ENCODE measurements at regions of chr5 and their contacts with region 1.

Region 1: DNA sequence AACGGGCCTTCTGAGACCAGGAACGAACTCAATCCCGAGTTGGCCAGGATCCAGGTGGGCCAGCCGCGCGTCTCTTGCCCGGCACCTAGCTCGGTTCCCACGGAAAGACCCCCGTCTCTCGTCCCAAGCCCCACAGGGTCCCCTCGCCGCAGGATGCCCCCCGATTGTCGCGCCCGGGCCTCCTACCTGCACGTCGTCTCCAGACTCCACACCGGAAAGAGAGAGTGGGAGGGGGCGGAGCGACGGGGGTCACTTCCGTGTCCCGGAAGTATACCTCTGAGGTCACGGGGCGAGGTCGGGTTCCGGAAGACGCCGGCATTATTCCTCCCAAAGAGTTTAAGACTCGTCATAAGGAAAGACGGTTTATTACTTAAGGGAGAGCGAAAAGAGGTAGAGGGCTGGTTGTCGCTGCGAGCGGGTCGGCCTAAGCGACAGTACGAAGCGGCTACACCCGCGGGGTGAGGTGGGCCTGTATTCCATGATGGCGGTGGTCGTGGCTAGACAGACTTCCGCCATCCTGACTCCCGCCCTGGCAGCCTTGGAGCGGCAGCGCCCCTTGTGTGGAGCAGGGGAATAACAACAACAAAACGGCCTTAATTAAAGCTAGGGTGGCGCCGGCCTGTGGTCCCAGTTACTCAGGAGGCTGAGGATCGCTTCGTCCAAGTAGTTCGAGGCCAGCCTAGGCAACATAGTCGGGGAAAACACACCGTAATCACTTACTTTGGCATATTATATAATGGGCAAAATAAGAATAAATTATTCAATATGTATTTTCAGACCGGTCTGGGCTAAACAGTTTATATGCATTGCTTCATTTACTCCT is at the start of gene RPS14:
- DNase-seq: peak; percentile 79 to 97 (median 91)

Region 2: GRCh38 chr5:150357326-150358260 is 92.1 kb before region 1 on chr5 and contains the start of gene TCOF1:
- intact Hi-C with region 1: loop called (anchors 10 kb)
- DNase-seq: peak; percentile 94 to 99 (median 98)

Region 3: GRCh38 chr5:150486402-150487198 is 36.9 kb after region 1 on chr5:
- intact Hi-C with region 1: loop called (anchors 5 kb)
- DNase-seq: peak in 38 of 42 donors; percentile 43 to 84 (median 66)

Region 4: DNA sequence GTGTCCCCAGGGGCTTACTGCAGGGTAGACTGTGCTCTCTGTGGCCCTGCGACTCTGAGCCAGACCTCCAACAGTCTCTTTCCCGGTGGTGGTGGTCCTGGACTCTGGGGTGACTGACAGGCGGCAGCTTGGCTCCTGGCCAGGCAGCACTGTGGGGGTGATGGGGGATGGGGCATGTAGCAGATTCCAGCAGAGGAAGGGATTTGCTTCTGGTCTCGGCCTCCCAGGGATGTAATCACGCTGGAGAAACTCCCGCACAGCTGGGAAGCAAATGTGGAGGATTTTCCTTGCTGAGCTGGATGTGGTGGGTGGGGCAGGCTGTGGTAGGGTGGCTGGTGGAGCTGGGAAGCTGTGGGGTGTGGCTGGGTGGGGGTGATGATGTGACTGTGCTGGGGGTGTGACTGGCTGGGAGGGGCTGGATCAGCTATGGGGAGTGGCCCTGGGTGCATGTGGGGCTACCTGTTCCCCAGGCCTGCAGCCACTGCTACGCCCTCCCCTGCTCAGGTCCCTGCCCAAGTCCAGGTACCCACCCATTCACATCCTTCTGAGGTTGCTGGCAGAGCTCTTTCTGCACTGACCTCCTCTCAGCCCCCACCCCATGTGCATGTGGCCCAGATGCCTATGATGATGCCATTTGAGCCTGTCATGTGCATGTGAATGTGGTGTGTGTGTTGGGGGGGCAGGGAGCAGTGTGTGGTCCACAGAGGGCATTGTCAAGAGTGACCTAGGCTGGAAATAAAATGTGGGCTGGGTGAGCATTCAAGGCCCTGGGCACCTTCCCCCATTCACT is 62.0 kb after region 1 on chr5:
- intact Hi-C with region 1: no loop called
- DNase-seq: peak in 41 of 42 donors; percentile 50 to 94 (median 80)

Region 5: DNA sequence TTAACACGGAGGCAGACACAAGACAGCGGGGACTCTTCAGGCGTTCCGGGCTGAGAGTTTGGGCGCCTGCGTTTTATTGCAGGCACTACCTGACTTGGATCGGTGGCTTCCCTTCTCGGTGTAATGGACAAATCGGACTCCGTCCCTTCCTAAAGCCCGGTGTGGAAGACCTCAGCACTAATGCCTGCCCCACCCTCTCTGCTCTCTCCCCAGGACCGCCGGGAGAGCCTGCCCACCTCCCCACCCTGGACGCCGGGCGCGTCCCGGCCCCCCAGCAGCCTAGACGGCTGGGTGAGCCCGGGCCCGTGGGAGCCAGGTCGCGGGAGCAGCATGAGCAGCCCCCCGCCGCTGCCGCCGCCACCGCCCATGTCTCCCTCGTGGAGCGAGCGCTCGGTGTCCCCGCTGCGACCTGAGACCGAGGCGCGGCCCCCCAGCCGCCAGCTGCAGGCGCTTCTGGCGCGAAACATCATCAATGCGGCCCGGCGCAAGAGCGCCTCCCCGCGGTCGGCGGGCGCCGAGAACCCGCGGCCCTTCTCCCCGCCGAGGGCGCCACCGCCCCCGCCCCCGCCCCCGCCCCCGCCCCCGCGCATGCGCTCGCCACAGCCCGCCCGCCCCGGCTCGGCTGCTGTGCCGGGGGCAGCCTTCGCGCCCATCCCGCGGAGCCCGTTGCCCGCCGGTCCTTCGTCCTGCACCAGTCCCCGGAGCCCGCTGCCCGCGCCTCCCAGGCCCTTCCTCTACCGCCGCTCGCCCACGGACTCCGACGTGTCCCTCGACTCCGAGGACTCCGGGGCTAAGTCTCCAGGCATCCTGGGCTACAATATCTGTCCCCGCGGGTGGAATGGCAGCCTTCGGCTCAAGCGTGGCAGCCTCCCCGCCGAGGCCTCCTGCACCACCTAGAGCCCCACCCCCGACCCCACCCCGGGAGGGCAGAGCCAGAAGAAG is 206.7 kb after region 1 on chr5:
- intact Hi-C with region 1: loop called (anchors 10 kb)
- DNase-seq: peak in 41 of 42 donors; percentile 29 to 88 (median 76)